HepG2 (cell line): ENCODE measurements at regions of chr20 and their contacts with region 1.

Region 1: DNA sequence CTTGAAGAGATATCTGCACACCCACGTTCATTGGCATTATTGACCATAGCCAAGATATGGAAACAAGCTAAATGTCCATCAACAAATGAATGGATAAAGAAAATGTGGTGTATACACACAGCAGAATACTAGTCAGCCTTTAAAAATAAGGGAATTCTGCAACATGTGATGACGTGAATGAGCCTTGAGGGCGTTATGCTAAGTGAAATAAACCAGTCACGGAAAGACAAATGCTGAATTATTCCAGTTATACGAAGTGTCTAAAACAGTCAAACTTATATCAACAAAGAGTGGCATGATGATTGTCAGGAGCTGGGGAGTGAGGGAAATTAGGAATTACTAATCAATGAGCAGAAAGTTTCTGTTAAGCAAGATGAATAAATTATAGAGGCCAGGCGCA is 8.4 kb upstream of the DEFB121 start:
- DNase-seq: no peak
- ATAC-seq: no peak
- H3K4me3 ChIP-seq: no peak overlapping the region
- H3K27ac ChIP-seq: no peak overlapping the region
- H3K4me1 ChIP-seq: no peaks in the 10 kb centered on the region
- H3K27me3 ChIP-seq: no peaks in the 10 kb centered on the region; a peak in 1 of 5 replicates
- CTCF ChIP-seq: no peak
- EP300 ChIP-seq: no peak
- POLR2A ChIP-seq: no peak
- RAD21 ChIP-seq: no peak

Region 2: DNA sequence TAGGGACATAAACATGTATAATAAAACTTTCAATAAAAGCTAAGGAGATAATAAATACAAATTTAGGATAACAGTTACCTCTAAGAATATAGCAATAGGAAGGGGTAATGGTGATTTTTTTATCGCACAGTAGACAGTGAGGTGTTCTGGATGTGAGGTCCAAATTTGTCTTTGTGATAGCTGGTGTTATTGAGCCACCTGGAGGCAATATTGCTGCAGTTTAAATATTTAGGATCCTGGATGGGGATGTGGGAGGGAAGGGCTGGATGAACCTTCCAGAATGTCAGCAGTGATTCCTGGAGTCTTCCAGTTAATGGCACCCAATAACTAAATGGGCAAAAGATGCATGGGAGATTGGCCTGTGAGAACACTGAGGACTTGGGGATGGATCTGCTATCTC is 40.0 kb after region 1 on chr20:
- CTCF ChIA-PET with region 1: no interaction called
- POLR2A ChIA-PET with region 1: no interaction called
- in situ Hi-C with region 1: no loop called
- intact Hi-C with region 1: loop called (anchors 1 kb)
- DNase-seq: no peak
- ATAC-seq: no peak
- H3K4me3 ChIP-seq: no peak overlapping the region
- H3K27ac ChIP-seq: no peak overlapping the region
- H3K4me1 ChIP-seq: peaks cover 8% of the 10 kb centered on the region
- H3K27me3 ChIP-seq: peaks cover 0 to 3% of the 10 kb centered on the region in 2 experiments; a peak in 3 of 5 replicates
- CTCF ChIP-seq: peak; percentile 55
- EP300 ChIP-seq: no peak
- POLR2A ChIP-seq: no peak
- RAD21 ChIP-seq: no peak